Heart left ventricle (tissue), 16 donors: ENCODE measurements at regions of chr10 and their contacts with region 1.

Region 1: GRCh38 chr10:101818119-101818871 is at the start of gene OGA:
- DNase-seq: peak; percentile 97 to 99 (median 99)
- ATAC-seq: peak; percentile 93 to 96 (median 94)
- H3K4me3 ChIP-seq: peak within 1 kb of the TSS; percentile 70 to 100 (median 96)
- H3K27ac ChIP-seq: peak within 1 kb of the TSS; percentile 90 to 99 (median 96)
- H3K4me1 ChIP-seq: peaks cover 0 to 41% (median 25%) of the 10 kb centered on the region in 12 donors
- H3K27me3 ChIP-seq: no peaks in the 10 kb centered on the region
- CTCF ChIP-seq: no peak
- POLR2A ChIP-seq: peak; percentile 88 to 96
- total RNA-seq, gene OGA: 53.8 to 164 (median 92.6) TPM

Region 2: GRCh38 chr10:101782811-101783735 is 35.2 kb before region 1 on chr10 and contains the start of gene NPM3:
- intact Hi-C with region 1: loop called in 1 of 10 experiments (anchors 5 kb)
- DNase-seq: peak; percentile 81 to 87 (median 85)
- ATAC-seq: peak; percentile 60 to 81 (median 77)
- H3K4me3 ChIP-seq: peak within 1 kb of the TSS; percentile 25 to 84 (median 66)
- H3K27ac ChIP-seq: peak within 1 kb of the TSS in 8 of 12 donors; percentile 20 to 68 (median 40)
- H3K4me1 ChIP-seq: peaks cover 0 to 55% (median 38%) of the 10 kb centered on the region in 12 donors
- H3K27me3 ChIP-seq: peaks cover 0 to 18% (median 5%) of the 10 kb centered on the region in 9 donors
- CTCF ChIP-seq: no peak
- POLR2A ChIP-seq: no peak
- total RNA-seq, gene NPM3: 5.9 to 23.1 (median 8.3) TPM